ENCODE measurements at regions of chr15 and their contacts with region 1.

Region 1: DNA sequence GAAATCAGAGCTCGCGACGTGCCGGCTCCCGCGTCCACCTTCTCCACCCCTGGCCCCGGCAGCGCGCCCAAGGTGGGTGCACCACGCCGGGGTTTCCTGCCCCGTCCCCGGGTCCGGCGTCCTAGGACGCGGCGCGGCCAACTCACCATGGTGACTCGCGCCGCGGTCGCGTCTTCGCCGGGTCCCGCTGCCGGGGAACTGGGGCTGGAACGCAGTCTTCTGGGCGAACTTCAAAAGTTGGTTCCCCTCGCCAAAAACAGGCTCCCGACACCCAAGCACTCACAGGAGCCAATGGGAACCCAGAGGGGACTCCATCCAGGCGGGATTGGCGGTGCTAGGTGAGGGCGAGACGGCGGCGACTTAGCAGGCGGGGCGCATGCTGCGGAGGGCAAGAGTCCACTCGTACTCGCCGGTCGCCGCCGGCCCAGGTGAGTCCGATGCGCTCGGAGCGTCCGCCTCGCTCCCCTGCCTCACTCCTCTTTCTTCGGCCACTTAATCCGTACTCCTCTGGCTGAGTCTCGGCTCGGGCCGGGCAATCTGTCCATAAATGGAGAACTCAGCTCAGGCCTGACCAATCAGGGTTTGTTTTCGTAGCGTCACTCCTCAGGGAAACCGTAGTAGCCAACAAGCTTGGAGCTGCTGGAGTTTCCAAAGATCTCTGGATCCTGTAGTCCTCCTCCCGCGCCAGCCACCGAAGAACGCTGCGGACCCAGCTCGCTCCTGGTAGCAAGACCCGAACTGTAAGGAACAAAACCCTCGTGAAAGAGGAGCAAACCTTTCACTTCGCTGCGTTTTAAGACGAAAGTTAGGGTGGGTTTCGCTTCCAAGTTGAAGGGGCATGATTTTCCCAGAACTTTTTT is at the start of gene MYO1E:
- DNase-seq: peak; percentile 96
- H3K4me3 ChIP-seq: peak within 1 kb of the TSS; percentile 74 to 100 (median 97)
- H3K27ac ChIP-seq: peak within 1 kb of the TSS; percentile 93 to 99 (median 96)
- H3K4me1 ChIP-seq: peaks cover 8 to 25% (median 18%) of the 10 kb centered on the region in 4 donors
- H3K27me3 ChIP-seq: no peaks in the 10 kb centered on the region
- CTCF ChIP-seq: no peak
- EP300 ChIP-seq: no peak
- POLR2A ChIP-seq: no peak
- total RNA-seq, gene MYO1E: 32.7 to 39.9 (median 37.6) TPM

Region 2: DNA sequence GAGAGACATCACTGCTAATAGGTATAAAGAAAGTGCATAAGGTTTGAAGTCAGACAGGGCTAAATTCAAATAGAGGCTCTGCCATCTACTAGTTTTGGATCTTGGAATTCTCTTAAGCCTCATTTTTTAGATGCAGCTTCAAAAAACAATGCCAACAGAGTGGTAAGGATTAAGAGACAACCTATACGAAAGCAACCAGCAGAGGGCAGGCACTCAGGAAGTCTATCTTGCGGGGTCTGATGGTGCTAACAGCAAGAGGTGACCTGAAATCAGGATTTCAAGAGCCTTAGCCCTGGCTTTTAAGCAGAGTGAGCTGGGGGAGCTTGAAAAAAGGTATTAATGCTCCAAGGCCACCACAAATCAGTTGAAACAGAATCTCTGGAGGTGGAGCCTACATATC is 125.2 kb before region 1 on chr15:
- intact Hi-C with region 1: loop called (anchors 5 kb)
- DNase-seq: no peak
- H3K4me3 ChIP-seq: no peak overlapping the region
- H3K27ac ChIP-seq: no peak overlapping the region
- H3K4me1 ChIP-seq: peaks cover 0 to 6% (median 0%) of the 10 kb centered on the region in 4 donors
- H3K27me3 ChIP-seq: no peaks in the 10 kb centered on the region
- CTCF ChIP-seq: peak; percentile 45 to 52 (median 51)
- EP300 ChIP-seq: no peak
- POLR2A ChIP-seq: no peak

Region 3: DNA sequence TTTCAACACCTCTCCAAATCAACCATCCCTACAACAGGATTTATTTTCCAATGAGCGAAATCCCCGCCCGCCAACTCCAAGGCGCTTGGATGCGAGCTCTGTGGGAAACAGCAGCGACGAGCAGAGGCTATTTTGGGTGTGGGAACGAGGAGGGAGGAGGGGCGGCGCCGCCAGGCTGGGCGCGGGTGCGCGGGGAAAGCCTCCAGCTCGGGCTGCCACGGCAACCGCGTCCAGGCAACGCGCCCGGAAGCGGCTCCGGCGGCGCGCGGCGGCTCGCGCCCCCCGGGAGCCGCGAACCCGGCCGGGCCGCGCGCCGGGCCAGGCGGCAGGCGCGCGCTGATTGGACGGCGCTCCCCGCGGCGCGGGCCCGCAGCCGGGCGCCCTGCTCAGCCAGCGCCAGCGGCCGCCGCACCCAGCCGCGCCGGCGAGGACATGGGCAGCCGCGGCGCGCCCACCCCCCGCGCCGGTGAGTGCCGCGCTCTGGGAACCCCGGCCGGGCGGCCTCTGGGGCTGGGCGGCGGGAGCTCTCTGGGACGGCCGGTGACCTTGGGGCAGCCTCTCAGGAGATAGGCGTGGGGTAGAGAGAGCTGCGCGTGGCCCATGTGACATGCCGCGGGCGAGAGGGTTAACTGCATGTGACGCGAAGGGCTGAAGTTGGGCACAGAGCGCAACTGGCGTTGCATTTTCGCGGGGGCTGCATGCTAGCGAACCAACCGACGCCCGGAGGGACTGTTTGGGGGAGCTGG is 65.4 kb after region 1 on chr15 and contains the start of gene FAM81A:
- intact Hi-C with region 1: loop called (anchors 5 kb)
- DNase-seq: peak; percentile 93
- H3K4me3 ChIP-seq: peak within 1 kb of the TSS; percentile 55 to 71 (median 58)
- H3K27ac ChIP-seq: peak within 1 kb of the TSS in 3 of 4 donors; percentile 33 to 50 (median 34)
- H3K4me1 ChIP-seq: peaks cover 13 to 24% (median 20%) of the 10 kb centered on the region in 4 donors
- H3K27me3 ChIP-seq: no peaks in the 10 kb centered on the region
- CTCF ChIP-seq: no peak
- EP300 ChIP-seq: no peak
- POLR2A ChIP-seq: no peak
- total RNA-seq, gene FAM81A: 0.33 to 1.2 (median 0.84) TPM